Aorta (tissue), 5 donors: ENCODE measurements at regions of chr17 and their contacts with region 1.

Region 1: DNA sequence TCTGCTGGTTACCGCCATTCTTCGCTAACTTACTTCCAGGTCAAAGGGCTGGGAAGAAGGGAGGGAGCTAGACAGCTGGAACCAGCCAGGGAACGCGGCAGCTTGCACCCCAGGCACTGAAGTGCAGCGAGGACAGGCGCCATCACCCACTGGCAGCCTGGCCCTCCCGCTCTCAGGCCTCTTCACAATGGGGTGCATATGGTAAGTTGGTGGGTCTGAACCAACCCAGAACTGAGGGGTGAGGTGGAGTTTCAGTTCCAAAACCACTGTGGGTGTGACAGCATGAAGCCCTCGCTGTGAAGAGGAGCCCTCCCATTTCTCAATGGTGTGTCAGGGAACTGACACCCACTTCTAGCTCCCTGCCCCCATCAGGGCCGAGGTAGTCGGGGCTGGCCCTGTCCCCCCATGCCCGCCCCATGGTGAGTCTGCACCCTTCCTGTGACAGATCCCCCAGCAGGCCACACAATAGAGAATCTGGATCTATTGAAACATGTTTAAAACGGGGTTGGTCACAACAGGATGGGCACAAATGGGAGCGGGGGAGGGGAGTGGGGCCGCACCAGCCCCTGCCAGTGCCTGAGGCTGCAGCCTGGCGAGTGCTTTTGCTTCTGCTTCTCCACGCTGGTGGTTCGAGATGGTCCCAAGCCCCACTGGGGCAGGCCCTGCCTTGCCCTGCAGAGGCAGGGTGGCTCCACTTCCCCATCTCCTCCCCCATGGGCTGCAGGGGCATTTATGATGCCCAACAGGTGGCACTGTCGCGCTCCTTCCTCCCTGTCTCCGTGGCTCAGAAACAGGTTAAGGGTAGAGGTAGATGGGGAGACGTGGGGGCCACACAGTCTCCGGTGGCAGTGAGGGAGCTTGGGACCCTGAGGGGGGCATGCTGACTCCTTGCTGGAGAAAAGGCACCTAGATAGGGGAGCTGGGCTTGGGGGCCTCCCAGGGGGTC is 2.3 kb downstream of the LIMD2 start:
- DNase-seq: peak in 1 of 2 donors; percentile 79
- ATAC-seq: no peak
- H3K4me3 ChIP-seq: no peak overlapping the region
- H3K27ac ChIP-seq: no peak overlapping the region
- H3K4me1 ChIP-seq: no peaks in the 10 kb centered on the region
- H3K27me3 ChIP-seq: no peaks in the 10 kb centered on the region

Region 2: DNA sequence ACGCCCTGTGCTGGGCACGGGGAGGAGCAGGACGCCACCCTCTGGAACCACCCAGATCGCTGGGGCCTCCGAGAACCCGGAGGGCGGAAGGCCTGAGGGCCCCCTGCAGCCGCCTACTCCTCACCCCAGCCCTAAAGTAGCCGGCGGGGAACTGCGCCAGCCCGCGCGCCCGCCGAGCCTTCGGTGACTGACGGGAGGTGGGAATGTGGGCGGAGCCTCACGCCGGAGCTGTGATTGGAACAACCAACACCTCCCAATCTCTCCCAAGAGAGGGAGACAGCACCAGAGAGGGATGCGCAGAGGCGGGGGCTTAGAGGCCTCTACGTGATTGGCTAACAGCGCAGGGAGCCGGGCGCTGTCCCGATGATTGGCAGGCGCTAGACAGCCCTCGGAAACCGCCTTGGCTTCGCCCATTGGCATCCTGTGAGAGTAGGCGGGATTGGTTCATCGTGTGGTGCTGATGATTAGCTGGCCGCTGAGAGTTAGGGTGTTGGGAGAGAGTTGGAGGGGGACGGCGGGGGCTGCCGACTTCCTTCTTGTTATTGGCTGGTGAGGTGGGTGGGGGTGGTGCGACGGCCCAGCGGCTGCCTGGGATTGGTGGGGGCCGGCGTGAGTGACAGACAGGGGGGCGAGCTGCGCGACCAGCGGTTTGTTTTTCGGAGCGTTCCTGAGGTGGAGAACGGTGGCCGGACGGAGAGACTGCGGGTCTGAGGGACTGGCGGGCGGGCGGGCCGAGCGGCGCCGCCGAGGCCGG is 75.7 kb before region 1 on chr17 and contains the start of gene MAP3K3:
- intact Hi-C with region 1: loop called in 1 of 2 experiments (anchors 5 kb)
- DNase-seq: peak; percentile 98 to 100
- ATAC-seq: peak; percentile 98
- H3K4me3 ChIP-seq: peak within 1 kb of the TSS; percentile 74 to 93
- H3K27ac ChIP-seq: peak within 1 kb of the TSS; percentile 34 to 77
- H3K4me1 ChIP-seq: peaks cover 2 to 5% of the 10 kb centered on the region in 2 donors
- H3K27me3 ChIP-seq: no peaks in the 10 kb centered on the region
- total RNA-seq, gene MAP3K3: 54.5 to 83.2 TPM